Astrocyte of the cerebellum (primary cell): ENCODE measurements at regions of chr12 and their contacts with region 1.

Region 1: DNA sequence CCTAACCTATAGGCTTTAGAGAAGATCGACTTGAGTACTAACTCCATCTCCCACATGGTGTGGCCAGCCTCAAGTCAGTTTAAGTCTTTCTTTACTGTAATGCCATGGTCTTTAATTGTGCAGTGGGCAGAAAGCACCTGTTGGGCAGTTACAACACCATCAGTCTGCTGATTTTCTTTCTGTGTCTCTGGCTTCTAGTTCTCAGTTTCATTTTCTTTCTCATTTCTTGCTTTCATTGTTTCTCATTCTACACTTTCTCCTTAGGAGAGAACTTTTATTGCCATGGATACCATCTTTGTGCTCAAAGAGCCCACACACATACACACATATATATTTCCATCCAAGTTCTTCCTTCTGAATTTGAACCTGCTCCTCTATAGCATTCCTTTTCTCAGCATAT is 96.1 kb upstream of the SLC16A7 start:
- DNase-seq: no peak
- H3K4me3 ChIP-seq: no peak overlapping the region
- CTCF ChIP-seq: no peak

Region 2: DNA sequence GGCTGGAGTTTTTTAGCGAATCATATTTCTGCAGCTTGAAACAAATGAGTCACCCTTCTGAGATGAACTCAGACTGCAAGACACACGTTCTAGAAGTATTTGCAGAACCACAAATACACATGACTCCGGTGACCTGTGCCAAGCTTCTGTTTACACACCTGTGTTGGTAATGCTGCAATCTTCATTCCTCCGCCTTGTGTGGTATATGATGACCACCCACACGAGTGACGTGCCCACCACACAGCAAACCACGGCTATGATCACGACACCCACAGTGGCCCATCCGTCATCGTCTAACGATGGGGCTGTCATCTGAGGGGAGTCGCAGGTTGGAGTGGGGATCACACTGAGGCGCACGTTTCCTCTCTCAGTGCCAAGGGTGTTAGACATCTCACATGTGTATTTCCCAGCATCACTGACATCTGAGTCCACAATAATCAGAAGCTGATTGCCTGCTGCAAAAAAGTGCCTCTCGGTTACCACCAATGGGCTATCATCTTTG is 622.5 kb before region 1 on chr12:
- in situ Hi-C with region 1: no loop called
- DNase-seq: peak; percentile 98
- H3K4me3 ChIP-seq: no peak overlapping the region
- CTCF ChIP-seq: no peak

Region 3: GRCh38 chr12:59322473-59322872 is 177.3 kb before region 1 on chr12:
- in situ Hi-C with region 1: no loop called
- DNase-seq: no peak
- H3K4me3 ChIP-seq: no peak overlapping the region
- CTCF ChIP-seq: no peak

Region 4: GRCh38 chr12:59444932-59445331 is 54.8 kb before region 1 on chr12:
- in situ Hi-C with region 1: no loop called
- DNase-seq: no peak
- H3K4me3 ChIP-seq: no peak overlapping the region
- CTCF ChIP-seq: peak; percentile 26

Region 5: DNA sequence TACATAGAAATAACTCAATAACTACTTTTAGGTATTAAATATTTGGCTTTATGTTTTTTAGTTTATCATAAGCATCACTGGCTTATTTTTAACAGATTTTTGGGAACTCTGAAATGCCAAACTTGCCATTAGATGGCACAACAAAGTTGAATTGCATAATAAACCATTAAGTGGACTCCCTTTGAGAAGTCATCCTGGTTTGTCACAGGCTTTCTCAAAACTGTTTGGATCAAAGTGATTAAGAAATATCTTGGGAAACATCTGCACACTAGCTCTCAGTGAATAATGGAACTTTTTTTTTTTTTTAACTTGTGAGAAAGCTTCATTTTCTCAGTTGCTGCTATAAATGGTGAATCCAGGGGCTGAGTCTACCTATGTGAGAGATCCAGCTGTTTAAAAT is 100.4 kb after region 1 on chr12:
- in situ Hi-C with region 1: loop called (anchors 5 kb)
- DNase-seq: no peak
- H3K4me3 ChIP-seq: no peak overlapping the region
- CTCF ChIP-seq: no peak